ENCODE measurements at regions of chr7 and their contacts with region 1.

Region 1: DNA sequence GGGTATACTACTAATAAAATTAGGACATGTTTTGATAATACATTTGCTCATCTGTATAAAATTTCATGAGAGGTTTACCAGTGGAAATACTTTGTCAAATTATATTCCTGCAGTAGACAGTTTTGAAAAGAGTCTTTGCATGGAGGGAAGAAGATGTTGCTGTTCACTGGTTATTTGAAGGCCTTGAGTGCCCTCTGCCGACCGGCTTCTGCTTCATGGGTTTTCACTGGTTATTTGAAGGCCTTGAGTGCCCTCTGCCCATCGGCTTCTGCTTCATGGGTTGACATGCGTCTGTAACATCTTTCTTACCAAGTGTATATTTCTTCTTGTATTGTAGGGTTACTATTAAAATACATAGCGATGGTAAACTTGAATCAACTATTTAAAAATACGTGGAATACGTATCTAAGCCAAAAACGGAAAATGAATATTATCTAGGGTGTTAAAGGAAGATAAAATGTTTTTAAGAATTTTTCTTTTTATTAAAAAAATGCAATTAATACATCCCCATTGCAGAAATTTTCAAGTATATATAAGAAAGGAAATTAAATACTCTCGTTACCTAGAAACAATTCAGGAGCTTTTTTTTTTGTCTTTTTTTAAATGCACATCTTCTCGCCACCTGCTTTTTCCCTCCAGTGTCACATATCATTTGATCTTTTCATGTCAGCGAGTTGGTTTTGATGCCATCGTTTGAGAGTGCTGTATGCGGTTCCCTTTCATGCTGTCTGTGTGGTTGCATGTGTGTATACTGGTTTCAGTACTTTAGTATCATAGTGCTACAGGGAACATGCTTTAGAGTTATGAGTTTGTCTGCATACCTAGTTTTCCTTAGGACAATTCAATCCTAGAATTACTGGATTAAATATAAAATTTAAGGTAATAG is 73.4 kb downstream of the SHH start:
- DNase-seq: peak; percentile 62 to 83 (median 74)
- ATAC-seq: peak; percentile 83 to 96 (median 95)
- H3K4me3 ChIP-seq: no peak overlapping the region
- H3K27ac ChIP-seq: no peak overlapping the region
- H3K4me1 ChIP-seq: no peaks in the 10 kb centered on the region
- H3K27me3 ChIP-seq: no peaks in the 10 kb centered on the region
- CTCF ChIP-seq: peak in 3 of 4 donors; percentile 41 to 55 (median 44)

Region 2: GRCh38 chr7:155398944-155399343 is 340.0 kb before region 1 on chr7:
- intact Hi-C with region 1: loop called in 1 of 3 experiments (anchors 10 kb)
- DNase-seq: peak in 1 of 6 donors; percentile 61
- ATAC-seq: no peak
- H3K4me3 ChIP-seq: no peak overlapping the region
- H3K27ac ChIP-seq: no peak overlapping the region
- H3K4me1 ChIP-seq: no peaks in the 10 kb centered on the region
- H3K27me3 ChIP-seq: no peaks in the 10 kb centered on the region
- CTCF ChIP-seq: no peak

Region 3: DNA sequence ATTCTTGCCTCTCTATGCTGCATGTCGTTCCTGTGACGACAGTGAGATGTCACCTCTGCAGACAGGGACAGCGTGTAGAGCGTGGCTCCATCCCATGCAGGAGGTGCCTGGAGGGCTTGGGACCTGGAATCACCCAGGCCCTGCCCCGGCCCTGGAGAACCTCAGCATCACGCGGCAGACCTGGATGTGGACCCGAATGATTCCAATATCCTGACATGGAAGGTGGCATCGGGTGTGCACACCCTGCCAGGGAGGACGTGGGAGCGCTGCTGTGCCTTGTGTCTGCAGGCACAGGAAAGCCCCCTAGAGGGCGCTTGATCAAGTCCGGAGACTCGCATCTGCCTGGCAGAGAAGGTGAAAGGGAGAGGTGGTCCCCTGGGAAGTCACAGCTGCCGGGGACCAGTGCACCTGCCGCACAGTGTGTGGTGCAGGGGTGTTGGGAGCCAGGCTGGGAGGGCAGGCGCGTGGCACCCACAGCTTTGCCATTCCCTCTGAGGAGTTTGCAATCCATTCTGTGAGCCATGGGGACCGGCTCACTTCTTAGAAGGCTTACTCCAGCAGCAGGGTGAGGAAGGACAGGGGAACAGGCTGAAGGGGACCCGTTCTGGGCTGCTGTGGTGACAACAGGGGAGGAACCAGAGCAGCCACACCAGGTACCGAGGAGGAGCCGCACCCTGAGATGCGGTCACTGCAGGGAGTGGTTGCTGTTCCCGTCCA is 326.2 kb before region 1 on chr7:
- intact Hi-C with region 1: loop called in 1 of 3 experiments (anchors 10 kb)
- DNase-seq: peak; percentile 35 to 85 (median 72)
- ATAC-seq: peak; percentile 56 to 95 (median 86)
- H3K4me3 ChIP-seq: no peak overlapping the region
- H3K27ac ChIP-seq: no peak overlapping the region
- H3K4me1 ChIP-seq: no peaks in the 10 kb centered on the region
- H3K27me3 ChIP-seq: no peaks in the 10 kb centered on the region
- CTCF ChIP-seq: peak; percentile 78 to 83 (median 82)

Region 4: GRCh38 chr7:155598810-155599210 is 140.1 kb before region 1 on chr7:
- intact Hi-C with region 1: loop called in 2 of 3 experiments (anchors 5 to 10 kb)
- DNase-seq: peak; percentile 60 to 99 (median 82)
- ATAC-seq: peak; percentile 77 to 92 (median 88)
- H3K4me3 ChIP-seq: no peak overlapping the region
- H3K27ac ChIP-seq: no peak overlapping the region
- H3K4me1 ChIP-seq: peaks cover 7 to 19% (median 12%) of the 10 kb centered on the region in 3 donors
- H3K27me3 ChIP-seq: no peaks in the 10 kb centered on the region
- CTCF ChIP-seq: peak; percentile 91 to 97 (median 93)

Region 5: GRCh38 chr7:155625557-155625956 is 113.3 kb before region 1 on chr7:
- intact Hi-C with region 1: no loop called
- DNase-seq: peak in 1 of 6 donors; percentile 25
- ATAC-seq: peak; percentile 22 to 90 (median 65)
- H3K4me3 ChIP-seq: no peak overlapping the region
- H3K27ac ChIP-seq: no peak overlapping the region
- H3K4me1 ChIP-seq: no peaks in the 10 kb centered on the region
- H3K27me3 ChIP-seq: no peaks in the 10 kb centered on the region
- CTCF ChIP-seq: no peak

Region 6: GRCh38 chr7:157022681-157023588 is 1284.0 kb after region 1 on chr7:
- intact Hi-C with region 1: no loop called
- DNase-seq: peak in 1 of 6 donors; percentile 27
- ATAC-seq: peak in 3 of 4 donors; percentile 45 to 71 (median 66)
- H3K4me3 ChIP-seq: no peak overlapping the region
- H3K27ac ChIP-seq: no peak overlapping the region
- H3K4me1 ChIP-seq: no peaks in the 10 kb centered on the region
- H3K27me3 ChIP-seq: peaks cover 0 to 13% (median 0%) of the 10 kb centered on the region in 4 donors
- CTCF ChIP-seq: no peak